ENCODE measurements at regions of chr2 and their contacts with region 1.

Region 1: DNA sequence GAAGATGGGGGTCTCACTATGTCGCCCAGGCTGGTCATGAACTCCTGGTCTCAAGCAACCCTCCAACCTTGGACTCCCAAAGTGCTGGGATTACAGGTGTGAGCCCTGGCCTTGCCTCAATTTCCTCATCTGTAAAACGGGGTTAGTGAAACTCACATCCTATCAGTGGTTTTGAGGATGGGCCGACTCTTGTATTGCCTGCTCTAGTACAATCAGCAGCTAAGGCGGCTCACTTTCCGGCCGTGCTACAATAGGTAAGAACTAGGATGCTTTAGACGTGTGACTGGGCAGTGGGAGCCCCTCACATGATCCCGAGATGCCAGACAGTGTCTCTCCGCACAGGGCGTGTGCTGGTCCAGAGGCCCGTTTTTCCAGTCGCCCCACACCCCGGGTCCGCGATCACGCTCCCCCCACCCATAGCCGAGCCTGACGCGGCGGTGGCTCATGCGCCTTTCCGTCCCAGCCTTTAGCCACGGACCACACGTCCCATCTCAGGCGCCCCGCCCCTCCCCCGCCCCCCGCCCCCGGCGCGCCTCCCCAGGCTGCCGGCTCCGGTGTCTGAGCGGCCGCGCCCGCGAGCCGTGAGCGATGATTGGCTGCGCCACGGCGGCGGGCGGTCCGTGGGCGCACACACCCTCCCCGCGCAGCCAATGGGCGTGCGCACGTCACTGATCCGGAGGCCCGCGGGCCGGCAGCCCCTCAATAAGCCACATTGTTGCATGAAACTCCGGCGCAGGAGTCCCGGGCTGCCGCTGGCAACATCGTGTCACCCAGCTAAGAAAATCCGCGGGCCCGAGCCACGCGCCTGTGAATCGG is at the start of gene HK2:
- DNase-seq: peak; percentile 87 to 91
- H3K4me3 ChIP-seq: peak within 1 kb of the TSS; percentile 80
- H3K4me3 Mint-ChIP-seq: peak within 1 kb of the TSS; percentile 92
- H3K27ac Mint-ChIP-seq: peak within 1 kb of the TSS; percentile 93
- H3K4me1 ChIP-seq: peaks cover 19% of the 10 kb centered on the region
- H3K4me1 Mint-ChIP-seq: peaks cover 33% of the 10 kb centered on the region
- H3K27me3 ChIP-seq: no peaks in the 10 kb centered on the region
- H3K27me3 Mint-ChIP-seq: no peaks in the 10 kb centered on the region
- CTCF ChIP-seq: no peak
- total RNA-seq, gene HK2: 19.9 and 22.6 TPM in 2 replicates

Region 2: DNA sequence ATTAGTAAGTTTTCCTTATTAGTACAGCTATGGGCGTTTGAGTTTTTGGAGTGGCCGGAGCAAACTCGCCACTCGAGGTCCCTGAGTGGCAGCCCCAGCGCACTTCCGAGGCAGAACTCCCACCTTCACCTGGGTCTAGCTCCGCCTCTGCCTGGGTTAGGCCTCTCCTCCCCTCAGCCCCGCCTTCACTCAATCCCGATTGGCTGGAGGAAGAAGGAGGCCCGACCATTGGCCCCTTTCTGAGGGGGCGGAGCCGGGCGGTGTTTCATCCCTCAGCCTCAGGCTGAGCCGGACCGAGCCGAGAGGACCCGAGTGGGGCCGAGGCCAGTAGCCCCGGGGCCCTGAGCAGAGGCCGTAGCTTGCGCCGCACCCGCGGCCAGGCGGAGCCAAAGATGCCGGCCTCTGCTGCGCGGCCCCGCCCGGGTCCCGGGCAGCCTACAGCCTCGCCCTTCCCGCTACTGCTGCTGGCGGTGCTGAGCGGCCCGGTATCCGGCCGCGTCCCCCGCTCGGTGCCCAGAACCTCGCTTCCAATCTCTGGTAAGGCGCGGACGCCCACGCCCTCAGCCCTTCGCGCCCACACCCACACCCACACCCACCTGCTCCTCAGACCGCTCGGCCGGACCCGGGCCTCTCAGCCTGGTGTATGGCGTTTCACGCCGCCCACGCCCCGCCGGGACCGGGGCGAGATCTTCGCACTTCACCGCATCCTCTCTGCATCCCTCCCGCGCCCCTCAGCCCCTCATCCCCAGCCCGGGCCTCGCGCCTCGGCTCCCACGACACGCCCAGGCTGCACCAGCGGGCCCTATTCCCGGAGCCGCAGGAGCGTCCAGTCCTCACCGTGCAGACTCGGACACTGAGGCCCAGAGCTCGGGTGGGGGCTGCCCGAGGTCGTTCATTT is 179.4 kb before region 1 on chr2 and contains the start of gene SEMA4F:
- CTCF ChIA-PET with region 1: no interaction called
- POLR2A ChIA-PET with region 1: interaction called, 10 read pairs
- intact Hi-C with region 1: no loop called
- DNase-seq: peak; percentile 99
- H3K4me3 ChIP-seq: peak within 1 kb of the TSS; percentile 82
- H3K4me3 Mint-ChIP-seq: peak within 1 kb of the TSS; percentile 73
- H3K27ac Mint-ChIP-seq: peak within 1 kb of the TSS; percentile 42
- H3K4me1 ChIP-seq: no peaks in the 10 kb centered on the region
- H3K4me1 Mint-ChIP-seq: peaks cover 10% of the 10 kb centered on the region
- H3K27me3 ChIP-seq: peaks cover 2% of the 10 kb centered on the region; the same call in 1 of the 2 replicates
- H3K27me3 Mint-ChIP-seq: no peaks in the 10 kb centered on the region
- CTCF ChIP-seq: no peak
- total RNA-seq, gene SEMA4F: 6.2 and 7.6 TPM in 2 replicates

Region 3: DNA sequence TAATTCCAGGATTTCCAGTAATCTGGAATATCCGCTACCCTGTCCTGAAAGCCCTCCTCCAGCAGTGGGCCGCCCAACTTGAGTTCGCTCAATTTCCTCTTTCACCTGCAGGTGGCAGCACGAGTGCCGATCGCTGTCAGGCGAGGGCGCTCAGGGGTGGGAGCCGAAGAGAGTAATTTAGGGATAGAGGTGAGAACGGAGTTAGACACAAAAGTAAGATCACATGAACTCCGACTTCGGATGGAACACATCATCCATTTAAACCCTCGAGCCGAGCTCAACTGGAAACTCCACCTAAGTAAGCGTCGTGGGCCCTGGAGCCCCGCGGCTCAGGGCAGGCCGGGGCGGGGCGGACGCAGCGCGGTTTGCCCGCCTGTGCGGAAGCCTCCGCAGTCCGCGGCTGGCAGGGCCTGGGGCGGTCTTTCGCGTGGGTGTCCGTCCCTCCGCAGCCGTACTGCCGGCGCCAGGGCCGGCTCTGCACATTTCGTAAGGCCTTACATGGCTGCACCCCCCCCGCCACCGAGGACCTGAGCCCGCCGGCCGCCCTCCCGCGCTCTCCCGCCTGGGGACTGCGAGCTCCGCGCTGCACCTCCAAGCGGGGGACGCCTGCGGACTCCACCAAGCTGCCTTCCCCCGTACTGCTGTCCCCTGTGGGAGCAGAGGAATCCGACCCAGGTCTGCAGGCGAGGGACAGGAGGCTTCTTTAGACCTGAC is 118.4 kb before region 1 on chr2:
- CTCF ChIA-PET with region 1: interaction called, 12 read pairs
- POLR2A ChIA-PET with region 1: interaction called, 3 read pairs
- intact Hi-C with region 1: loop called (anchors 1 kb)
- DNase-seq: peak; percentile 80 to 90
- H3K4me3 ChIP-seq: peak overlapping the region; percentile 62
- H3K4me3 Mint-ChIP-seq: peak overlapping the region; percentile 86
- H3K27ac Mint-ChIP-seq: no peak overlapping the region
- H3K4me1 ChIP-seq: no peaks in the 10 kb centered on the region
- H3K4me1 Mint-ChIP-seq: no peaks in the 10 kb centered on the region
- H3K27me3 ChIP-seq: no peaks in the 10 kb centered on the region; the same call in 1 of the 2 replicates
- H3K27me3 Mint-ChIP-seq: peaks cover 5% of the 10 kb centered on the region
- CTCF ChIP-seq: peak; percentile 88 to 95

Region 4: GRCh38 chr2:74777161-74777900 is 56.3 kb before region 1 on chr2:
- CTCF ChIA-PET with region 1: no interaction called
- POLR2A ChIA-PET with region 1: interaction called, 10 read pairs
- intact Hi-C with region 1: no loop called
- DNase-seq: no peak
- H3K4me3 ChIP-seq: no peak overlapping the region
- H3K4me3 Mint-ChIP-seq: no peak overlapping the region
- H3K27ac Mint-ChIP-seq: no peak overlapping the region
- H3K4me1 ChIP-seq: no peaks in the 10 kb centered on the region
- H3K4me1 Mint-ChIP-seq: peaks cover 9% of the 10 kb centered on the region
- H3K27me3 ChIP-seq: no peaks in the 10 kb centered on the region
- H3K27me3 Mint-ChIP-seq: no peaks in the 10 kb centered on the region
- CTCF ChIP-seq: no peak

Region 5: GRCh38 chr2:74843898-74844297 is 10.3 kb after region 1 on chr2:
- CTCF ChIA-PET with region 1: interaction called, 10 read pairs
- POLR2A ChIA-PET with region 1: interaction called, 5 read pairs
- intact Hi-C with region 1: loop called (anchors 1 kb)
- DNase-seq: no peak
- H3K4me3 ChIP-seq: no peak overlapping the region
- H3K4me3 Mint-ChIP-seq: peak overlapping the region; percentile 39
- H3K27ac Mint-ChIP-seq: peak overlapping the region; percentile 70
- H3K4me1 ChIP-seq: peaks cover 59% of the 10 kb centered on the region
- H3K4me1 Mint-ChIP-seq: peaks cover 53% of the 10 kb centered on the region
- H3K27me3 ChIP-seq: no peaks in the 10 kb centered on the region
- H3K27me3 Mint-ChIP-seq: no peaks in the 10 kb centered on the region
- CTCF ChIP-seq: no peak

Region 6: GRCh38 chr2:74856004-74856578 is 22.5 kb after region 1 on chr2:
- CTCF ChIA-PET with region 1: interaction called, 3 read pairs
- POLR2A ChIA-PET with region 1: no interaction called
- intact Hi-C with region 1: loop called (anchors 1 kb)
- DNase-seq: peak; percentile 71 to 80
- H3K4me3 ChIP-seq: no peak overlapping the region
- H3K4me3 Mint-ChIP-seq: peak overlapping the region; percentile 10
- H3K27ac Mint-ChIP-seq: peak overlapping the region; percentile 77
- H3K4me1 ChIP-seq: peaks cover 40% of the 10 kb centered on the region
- H3K4me1 Mint-ChIP-seq: peaks cover 48% of the 10 kb centered on the region
- H3K27me3 ChIP-seq: no peaks in the 10 kb centered on the region
- H3K27me3 Mint-ChIP-seq: no peaks in the 10 kb centered on the region
- CTCF ChIP-seq: no peak

Region 7: DNA sequence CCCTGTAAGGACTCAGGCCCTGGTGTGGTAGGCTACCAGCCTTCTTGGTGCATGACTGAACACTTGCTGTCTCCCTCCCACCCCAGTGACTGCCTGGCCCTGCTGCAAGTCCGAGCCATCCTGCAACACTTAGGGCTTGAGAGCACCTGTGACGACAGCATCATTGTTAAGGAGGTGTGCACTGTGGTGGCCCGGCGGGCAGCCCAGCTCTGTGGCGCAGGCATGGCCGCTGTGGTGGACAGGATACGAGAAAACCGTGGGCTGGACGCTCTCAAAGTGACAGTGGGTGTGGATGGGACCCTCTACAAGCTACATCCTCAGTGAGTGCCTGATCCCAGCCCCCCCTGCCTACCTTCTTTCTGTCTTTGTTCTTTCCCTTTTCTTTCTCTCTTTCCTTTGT is 55.5 kb after region 1 on chr2:
- CTCF ChIA-PET with region 1: no interaction called
- POLR2A ChIA-PET with region 1: no interaction called
- intact Hi-C with region 1: no loop called
- DNase-seq: no peak
- H3K4me3 ChIP-seq: no peak overlapping the region
- H3K4me3 Mint-ChIP-seq: no peak overlapping the region
- H3K27ac Mint-ChIP-seq: no peak overlapping the region
- H3K4me1 ChIP-seq: no peaks in the 10 kb centered on the region
- H3K4me1 Mint-ChIP-seq: no peaks in the 10 kb centered on the region
- H3K27me3 ChIP-seq: no peaks in the 10 kb centered on the region
- H3K27me3 Mint-ChIP-seq: no peaks in the 10 kb centered on the region
- CTCF ChIP-seq: no peak